MCF 10A (cell line): ENCODE measurements at regions of chrX and their contacts with region 1.

Region 1: GRCh38 chrX:71181910-71182799 is 37.5 kb downstream of the NLGN3 start:
- DNase-seq: peak; percentile 94
- H3K4me3 Mint-ChIP-seq: peak overlapping the region; percentile 83
- H3K27ac Mint-ChIP-seq: peak overlapping the region; percentile 97
- H3K4me1 Mint-ChIP-seq: no peaks in the 10 kb centered on the region
- H3K27me3 Mint-ChIP-seq: peaks cover 8% of the 10 kb centered on the region
- CTCF ChIP-seq: no peak

Region 2: GRCh38 chrX:70769659-70770232 is 412.4 kb before region 1 on chrX:
- CTCF ChIA-PET with region 1: interaction called, 12 read pairs
- POLR2A ChIA-PET with region 1: no interaction called
- intact Hi-C with region 1: loop called (anchors 1 kb)
- DNase-seq: peak; percentile 16
- H3K4me3 Mint-ChIP-seq: no peak overlapping the region
- H3K27ac Mint-ChIP-seq: no peak overlapping the region
- H3K4me1 Mint-ChIP-seq: no peaks in the 10 kb centered on the region
- H3K27me3 Mint-ChIP-seq: peaks cover 58% of the 10 kb centered on the region
- CTCF ChIP-seq: peak; percentile 47

Region 3: DNA sequence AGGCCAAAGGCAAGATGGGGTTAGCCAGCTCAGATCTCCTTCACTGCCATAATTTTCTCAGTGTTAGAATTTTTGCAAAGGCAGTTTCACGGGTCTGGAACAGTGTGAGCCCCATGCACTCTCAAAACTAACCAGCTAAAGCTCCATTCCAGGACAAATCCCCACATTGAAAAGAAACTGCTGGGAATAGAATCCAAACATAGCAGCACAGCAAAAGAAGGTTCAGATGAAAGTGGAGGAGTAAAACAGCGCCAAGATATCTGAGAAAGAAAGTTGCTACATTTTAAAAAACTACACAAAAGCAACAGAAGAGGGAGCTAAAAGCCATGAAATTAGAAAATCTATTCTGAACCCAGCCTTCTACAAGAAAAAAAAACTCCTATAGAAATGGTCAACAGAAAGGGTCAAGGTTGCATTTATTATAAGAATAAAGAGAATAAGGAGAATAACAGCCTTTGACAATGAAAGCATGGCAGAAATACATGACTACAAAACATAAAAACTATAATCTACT is 211.6 kb before region 1 on chrX:
- CTCF ChIA-PET with region 1: interaction called, 68 read pairs
- POLR2A ChIA-PET with region 1: interaction called, 4 read pairs
- intact Hi-C with region 1: no loop called
- DNase-seq: peak; percentile 26
- H3K4me3 Mint-ChIP-seq: no peak overlapping the region
- H3K27ac Mint-ChIP-seq: no peak overlapping the region
- H3K4me1 Mint-ChIP-seq: no peaks in the 10 kb centered on the region
- H3K27me3 Mint-ChIP-seq: peaks cover 18% of the 10 kb centered on the region
- CTCF ChIP-seq: peak; percentile 36

Region 4: GRCh38 chrX:70998411-70999027 is 183.6 kb before region 1 on chrX:
- CTCF ChIA-PET with region 1: interaction called, 29 read pairs
- POLR2A ChIA-PET with region 1: interaction called, 4 read pairs
- intact Hi-C with region 1: loop called (anchors 1 kb)
- DNase-seq: peak; percentile 81
- H3K4me3 Mint-ChIP-seq: no peak overlapping the region
- H3K27ac Mint-ChIP-seq: peak overlapping the region; percentile 11
- H3K4me1 Mint-ChIP-seq: peaks cover 8% of the 10 kb centered on the region
- H3K27me3 Mint-ChIP-seq: peaks cover 18% of the 10 kb centered on the region
- CTCF ChIP-seq: no peak

Region 5: DNA sequence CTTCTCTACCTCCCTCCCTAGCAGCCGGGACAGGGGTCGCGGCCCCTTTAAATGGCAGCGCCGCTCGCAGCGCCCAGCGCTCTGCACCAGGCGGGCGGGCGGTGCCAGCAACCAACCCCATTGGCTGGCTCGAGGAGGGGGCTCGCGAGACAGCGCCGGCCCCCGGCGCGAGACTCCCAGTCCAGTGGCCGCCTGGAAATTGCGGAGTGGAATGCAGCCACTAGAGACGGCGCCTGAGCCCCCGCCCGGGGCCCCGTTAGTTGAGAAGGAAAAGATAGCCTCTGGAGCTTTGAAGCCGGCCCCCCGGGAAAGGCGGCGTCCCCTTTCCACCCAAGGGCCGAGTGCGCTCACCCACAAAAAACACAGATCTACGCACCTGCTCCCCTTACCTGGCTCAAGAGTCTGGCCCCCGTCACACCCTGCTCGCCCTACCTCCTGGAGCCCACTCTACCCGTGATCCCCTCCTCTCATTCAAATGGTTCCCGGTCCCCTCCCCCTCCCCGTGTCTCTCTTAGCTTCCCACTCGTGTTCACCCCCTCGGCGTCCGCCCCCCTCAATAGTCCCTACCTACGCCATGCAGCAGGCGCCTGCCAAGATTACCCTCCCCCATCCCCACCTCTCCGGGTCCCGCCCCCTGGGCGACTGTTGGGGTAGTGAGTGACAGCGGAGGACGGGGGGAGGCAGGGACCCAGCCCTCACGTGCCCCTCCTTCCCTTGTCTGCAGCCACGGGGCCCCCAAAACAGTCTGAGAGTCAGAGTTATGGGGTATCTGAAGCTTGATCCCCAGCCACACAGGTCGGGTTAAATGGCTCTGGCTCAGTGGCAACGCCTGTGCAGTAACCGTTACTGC is 72.2 kb after region 1 on chrX and contains the start of gene ZMYM3:
- CTCF ChIA-PET with region 1: no interaction called
- POLR2A ChIA-PET with region 1: interaction called, 14 read pairs
- intact Hi-C with region 1: no loop called
- DNase-seq: peak; percentile 83
- H3K4me3 Mint-ChIP-seq: peak within 1 kb of the TSS; percentile 92
- H3K27ac Mint-ChIP-seq: peak within 1 kb of the TSS; percentile 82
- H3K4me1 Mint-ChIP-seq: peaks cover 8% of the 10 kb centered on the region
- H3K27me3 Mint-ChIP-seq: peaks cover 10% of the 10 kb centered on the region
- CTCF ChIP-seq: no peak
- total RNA-seq, gene ZMYM3: 7.9 and 8.4 TPM in 2 replicates

Region 6: DNA sequence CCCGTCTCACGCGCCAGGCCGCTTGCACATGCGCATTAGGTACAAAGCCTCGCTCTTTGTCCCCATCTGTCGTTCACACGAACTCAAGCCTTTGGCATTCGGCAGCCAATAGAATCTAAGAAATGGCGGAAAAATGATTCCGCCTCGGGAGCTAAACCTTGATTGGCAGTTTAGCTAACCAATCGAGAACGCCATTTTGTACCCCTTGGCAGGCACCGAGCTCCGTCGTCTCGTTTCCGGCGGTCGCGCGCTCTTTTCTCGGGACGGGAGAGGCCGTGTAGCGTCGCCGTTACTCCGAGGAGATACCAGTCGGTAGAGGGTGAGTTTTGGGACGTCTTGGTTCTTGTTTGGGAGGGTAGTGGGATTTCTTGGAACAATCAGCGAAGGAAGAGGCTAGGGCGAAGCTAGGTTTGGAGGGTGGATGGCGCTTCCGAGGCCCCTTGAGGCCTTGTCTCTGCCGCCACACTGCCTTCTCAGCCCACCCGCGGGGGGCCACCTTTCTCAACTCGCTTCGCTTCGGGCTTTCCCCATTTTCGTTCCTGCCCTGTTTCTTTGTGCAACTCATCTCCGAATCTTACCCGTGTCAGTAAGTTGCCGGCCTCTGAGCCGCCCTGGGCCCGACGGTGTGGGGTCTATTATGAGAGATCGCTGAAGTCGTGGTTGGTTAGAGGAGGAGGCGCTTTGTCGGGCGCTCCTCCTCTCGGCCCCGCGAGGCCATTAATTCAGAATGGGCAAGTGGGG is 101.4 kb after region 1 on chrX and contains the start of gene NONO:
- CTCF ChIA-PET with region 1: interaction called, 3 read pairs
- POLR2A ChIA-PET with region 1: interaction called, 32 read pairs
- intact Hi-C with region 1: loop called (anchors 5 kb)
- DNase-seq: peak; percentile 97
- H3K4me3 Mint-ChIP-seq: peak within 1 kb of the TSS; percentile 96
- H3K27ac Mint-ChIP-seq: peak within 1 kb of the TSS; percentile 98
- H3K4me1 Mint-ChIP-seq: no peaks in the 10 kb centered on the region
- H3K27me3 Mint-ChIP-seq: peaks cover 10% of the 10 kb centered on the region
- CTCF ChIP-seq: no peak
- total RNA-seq, gene NONO: 255 and 292 TPM in 2 replicates

Region 7: GRCh38 chrX:71365876-71366673 is 183.9 kb after region 1 on chrX and contains the start of gene TAF1:
- CTCF ChIA-PET with region 1: no interaction called
- POLR2A ChIA-PET with region 1: interaction called, 13 read pairs
- intact Hi-C with region 1: no loop called
- DNase-seq: peak; percentile 95
- H3K4me3 Mint-ChIP-seq: peak within 1 kb of the TSS; percentile 96
- H3K27ac Mint-ChIP-seq: peak within 1 kb of the TSS; percentile 97
- H3K4me1 Mint-ChIP-seq: peaks cover 5% of the 10 kb centered on the region
- H3K27me3 Mint-ChIP-seq: peaks cover 4% of the 10 kb centered on the region
- CTCF ChIP-seq: no peak
- total RNA-seq, gene TAF1: 31.9 and 34.9 TPM in 2 replicates

Region 8: DNA sequence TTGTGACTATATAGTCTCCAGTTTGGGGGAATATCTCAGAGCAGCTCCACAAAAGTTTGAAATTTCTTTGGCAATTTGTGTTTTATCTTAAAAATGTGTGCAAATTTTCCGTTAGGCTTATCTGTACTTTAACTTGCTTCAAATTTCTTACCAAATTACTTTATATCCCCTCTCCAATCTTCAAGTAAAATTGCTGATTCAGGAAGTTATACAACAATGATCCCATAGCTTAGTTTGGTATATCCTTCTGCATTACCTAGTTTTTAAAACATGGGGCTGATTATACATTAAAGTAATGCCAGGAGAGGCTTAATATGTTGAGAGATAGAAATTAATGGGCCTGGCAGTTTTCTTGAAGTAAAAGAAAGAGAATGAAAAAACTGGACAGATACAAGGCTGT is 250.6 kb after region 1 on chrX:
- CTCF ChIA-PET with region 1: no interaction called
- POLR2A ChIA-PET with region 1: no interaction called
- intact Hi-C with region 1: no loop called
- DNase-seq: no peak
- H3K4me3 Mint-ChIP-seq: no peak overlapping the region
- H3K27ac Mint-ChIP-seq: no peak overlapping the region
- H3K4me1 Mint-ChIP-seq: no peaks in the 10 kb centered on the region
- H3K27me3 Mint-ChIP-seq: peaks cover 61% of the 10 kb centered on the region
- CTCF ChIP-seq: no peak